Naive thymus-derived CD4-positive, alpha-beta T cell (primary cell): ENCODE measurements at regions of chr6 and their contacts with region 1.

Region 1: GRCh38 chr6:156801712-156802111 is 24.5 kb downstream of the ARID1B start:
- DNase-seq: no peak
- ATAC-seq: no peak
- H3K4me3 ChIP-seq: no peak overlapping the region
- H3K4me3 Mint-ChIP-seq: peak overlapping the region in 5 of 10 donors; percentile 13 to 62 (median 29)
- H3K27ac ChIP-seq: no peak overlapping the region
- H3K27ac Mint-ChIP-seq: peak overlapping the region in 2 of 9 donors; percentile 25 to 49
- H3K4me1 ChIP-seq: peaks cover 13 to 29% of the 10 kb centered on the region in 2 donors
- H3K4me1 Mint-ChIP-seq: peaks cover 33 to 94% (median 80%) of the 10 kb centered on the region in 7 donors
- H3K27me3 ChIP-seq: no peaks in the 10 kb centered on the region
- H3K27me3 Mint-ChIP-seq: no peaks in the 10 kb centered on the region

Region 2: GRCh38 chr6:156816505-156816904 is 14.8 kb after region 1 on chr6:
- CTCF ChIA-PET with region 1: no interaction called
- POLR2A ChIA-PET with region 1: no interaction called
- intact Hi-C with region 1: loop called in 1 of 2 experiments (anchors 2 kb)
- DNase-seq: no peak
- ATAC-seq: peak; percentile 57
- H3K4me3 ChIP-seq: no peak overlapping the region
- H3K4me3 Mint-ChIP-seq: peak overlapping the region in 6 of 10 donors; percentile 3 to 53 (median 40)
- H3K27ac ChIP-seq: no peak overlapping the region
- H3K27ac Mint-ChIP-seq: peak overlapping the region in 4 of 9 donors; percentile 41 to 66 (median 47)
- H3K4me1 ChIP-seq: peaks cover 27 to 38% of the 10 kb centered on the region in 2 donors
- H3K4me1 Mint-ChIP-seq: peaks cover 28 to 94% (median 88%) of the 10 kb centered on the region in 7 donors
- H3K27me3 ChIP-seq: no peaks in the 10 kb centered on the region
- H3K27me3 Mint-ChIP-seq: no peaks in the 10 kb centered on the region

Region 3: DNA sequence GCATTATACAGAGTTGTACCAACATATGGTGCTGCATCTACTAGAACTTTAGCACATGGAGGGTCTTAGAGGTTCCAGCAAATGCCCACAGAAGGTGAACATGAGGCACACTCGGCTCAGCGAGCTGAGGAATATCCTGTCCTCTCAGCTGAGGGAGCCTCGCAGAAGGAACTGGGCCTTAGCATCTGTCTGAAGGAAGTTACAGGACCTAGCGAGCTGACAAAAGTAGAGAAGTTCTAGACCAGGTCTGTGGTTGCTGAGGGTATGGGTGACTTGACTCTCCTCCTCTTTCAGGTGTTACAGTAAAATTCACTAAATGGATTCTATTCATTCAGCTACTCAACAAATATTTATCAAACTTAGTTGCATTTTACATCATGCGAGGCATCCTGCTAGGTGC is 736.5 kb after region 1 on chr6:
- CTCF ChIA-PET with region 1: no interaction called
- POLR2A ChIA-PET with region 1: no interaction called
- intact Hi-C with region 1: no loop called
- DNase-seq: no peak
- ATAC-seq: no peak
- H3K4me3 ChIP-seq: no peak overlapping the region
- H3K4me3 Mint-ChIP-seq: no peak overlapping the region
- H3K27ac ChIP-seq: no peak overlapping the region
- H3K27ac Mint-ChIP-seq: peak overlapping the region in 3 of 9 donors; percentile 20 to 51 (median 50)
- H3K4me1 ChIP-seq: peaks cover 11 to 45% of the 10 kb centered on the region in 2 donors
- H3K4me1 Mint-ChIP-seq: peaks cover 22 to 58% (median 33%) of the 10 kb centered on the region in 7 donors
- H3K27me3 ChIP-seq: no peaks in the 10 kb centered on the region
- H3K27me3 Mint-ChIP-seq: no peaks in the 10 kb centered on the region